Activated naive CD4-positive, alpha-beta T cell treated with anti-CD3 and anti-CD28 coated beads, Interleukin-2, amount 10 ng/mL, durations not matched to agents 7 days and 5 days (primary cell): ENCODE measurements at regions of chr1 and their contacts with region 1.

Region 1: DNA sequence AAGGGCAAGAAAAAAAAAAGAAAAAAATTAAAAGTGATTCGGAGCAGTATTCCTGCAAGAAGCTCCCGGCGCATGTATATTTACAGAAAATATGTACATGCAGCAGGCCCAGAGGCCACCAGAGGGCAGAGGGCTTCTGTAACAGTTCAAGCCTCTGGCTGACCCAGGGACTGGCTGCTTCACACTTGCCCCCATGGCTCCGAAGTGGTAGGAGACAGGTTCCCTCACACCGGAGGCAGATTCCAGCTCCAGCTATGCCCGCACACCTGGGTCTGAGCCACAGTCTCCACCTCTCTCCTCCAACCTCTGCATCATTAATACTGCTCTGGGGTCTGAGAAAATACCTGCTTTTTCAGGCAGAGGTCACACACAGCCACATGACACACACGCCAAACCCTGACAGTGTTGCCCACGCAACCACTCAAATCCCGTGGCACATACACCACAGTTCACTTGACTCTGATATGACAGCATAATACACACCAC is 2.2 kb upstream of the ARHGAP30 start:
- DNase-seq: peak; percentile 74
- H3K4me3 Mint-ChIP-seq: no peak overlapping the region
- H3K27ac Mint-ChIP-seq: peak overlapping the region; percentile 16
- H3K4me1 Mint-ChIP-seq: peaks cover 49% of the 10 kb centered on the region
- H3K27me3 Mint-ChIP-seq: peaks cover 4% of the 10 kb centered on the region

Region 2: GRCh38 chr1:160748181-160748877 is 323.6 kb before region 1 on chr1:
- CTCF ChIA-PET with region 1: no interaction called
- DNase-seq: no peak
- H3K4me3 Mint-ChIP-seq: no peak overlapping the region
- H3K27ac Mint-ChIP-seq: no peak overlapping the region
- H3K4me1 Mint-ChIP-seq: peaks cover 79% of the 10 kb centered on the region
- H3K27me3 Mint-ChIP-seq: no peaks in the 10 kb centered on the region

Region 3: DNA sequence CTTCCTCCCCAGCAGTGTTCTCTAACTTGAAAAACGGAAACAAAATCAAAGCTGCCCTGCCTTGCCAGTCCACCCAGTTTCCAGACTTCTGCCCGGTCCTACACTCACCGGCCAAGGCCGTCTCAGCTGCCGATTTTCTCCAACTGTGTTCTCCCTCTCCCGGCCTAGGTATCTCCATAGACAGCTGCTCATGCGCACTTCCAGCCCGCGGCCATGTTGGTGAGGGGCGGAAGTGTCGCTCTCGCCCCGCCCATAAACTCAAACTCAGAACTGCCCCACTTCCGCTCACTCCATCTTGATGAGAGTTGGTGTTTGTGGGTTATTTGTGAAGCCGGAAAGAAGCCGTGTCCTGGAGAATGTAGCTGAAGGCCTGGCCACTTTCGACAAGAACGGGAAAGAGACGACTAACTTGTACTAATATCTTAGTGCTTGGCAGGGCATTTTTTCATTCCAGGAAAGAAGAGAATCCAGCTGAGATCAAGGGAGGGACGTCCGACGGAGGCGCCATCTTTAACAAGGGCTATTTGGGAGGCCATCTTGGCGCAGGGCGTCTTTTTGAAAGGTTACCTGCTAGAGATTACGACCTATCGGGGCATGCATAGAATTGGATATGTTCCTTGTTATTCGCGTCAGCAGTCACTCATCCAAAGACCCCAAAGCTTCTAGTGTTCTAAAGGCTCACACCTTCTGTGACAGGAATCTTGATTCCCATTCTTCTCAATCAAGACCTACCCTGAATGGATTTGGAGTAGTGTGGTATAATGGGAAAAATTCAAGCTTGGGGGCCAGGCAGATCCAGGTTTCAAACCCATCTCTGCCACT is 26.0 kb before region 1 on chr1 and contains the start of gene USF1:
- CTCF ChIA-PET with region 1: interaction called, 35 read pairs
- DNase-seq: peak; percentile 94
- H3K4me3 Mint-ChIP-seq: peak within 1 kb of the TSS; percentile 86
- H3K27ac Mint-ChIP-seq: peak within 1 kb of the TSS; percentile 97
- H3K4me1 Mint-ChIP-seq: peaks cover 57% of the 10 kb centered on the region
- H3K27me3 Mint-ChIP-seq: no peaks in the 10 kb centered on the region

Region 4: DNA sequence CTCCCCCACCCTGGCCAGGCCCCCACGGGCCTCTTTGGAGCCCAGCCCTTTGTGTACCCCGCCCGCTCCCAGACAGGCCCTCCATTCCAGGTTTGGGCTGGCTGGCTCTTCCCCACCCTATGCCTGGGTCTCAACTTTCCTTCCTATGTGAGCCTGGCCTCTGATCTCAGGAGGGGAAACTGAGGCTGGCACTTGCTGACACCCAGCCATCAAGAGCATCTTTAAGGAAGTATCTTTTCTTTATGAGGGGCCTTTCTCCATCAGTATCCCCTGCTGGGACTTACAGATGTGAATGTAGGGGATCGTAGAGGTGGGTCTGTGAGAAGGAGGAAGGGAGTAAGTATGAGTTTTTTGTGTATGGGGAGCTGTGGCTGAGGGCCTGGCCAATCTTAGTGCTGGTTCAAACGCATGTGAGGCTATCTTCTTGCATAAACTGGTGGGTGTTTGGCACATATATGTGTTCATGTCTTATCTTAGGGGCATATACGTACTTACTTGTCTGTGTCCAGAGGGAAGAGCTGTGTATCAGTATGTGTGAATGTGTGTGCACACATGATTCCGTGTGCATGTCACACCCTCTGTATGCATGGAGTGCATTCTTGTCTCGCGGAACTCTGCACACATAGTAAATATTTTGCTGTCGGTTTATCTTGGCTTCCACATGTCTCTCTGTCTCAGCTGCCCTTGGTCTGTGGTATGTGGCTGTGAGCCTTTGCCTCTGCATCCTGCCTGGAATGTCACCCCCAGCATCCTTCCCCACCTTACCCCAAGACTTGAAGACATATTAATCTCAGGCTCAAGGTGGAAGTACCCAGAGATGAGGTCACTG is 12.0 kb after region 1 on chr1:
- CTCF ChIA-PET with region 1: interaction called, 20 read pairs
- DNase-seq: no peak
- H3K4me3 Mint-ChIP-seq: no peak overlapping the region
- H3K27ac Mint-ChIP-seq: no peak overlapping the region
- H3K4me1 Mint-ChIP-seq: peaks cover 2% of the 10 kb centered on the region
- H3K27me3 Mint-ChIP-seq: peaks cover 51% of the 10 kb centered on the region

Region 5: GRCh38 chr1:161216945-161217712 is 145.2 kb after region 1 on chr1:
- CTCF ChIA-PET with region 1: no interaction called
- DNase-seq: no peak
- H3K4me3 Mint-ChIP-seq: no peak overlapping the region
- H3K27ac Mint-ChIP-seq: no peak overlapping the region
- H3K4me1 Mint-ChIP-seq: peaks cover 52% of the 10 kb centered on the region
- H3K27me3 Mint-ChIP-seq: peaks cover 5% of the 10 kb centered on the region

Region 6: GRCh38 chr1:161238039-161238473 is 166.1 kb after region 1 on chr1 and contains the start of gene NR1I3:
- CTCF ChIA-PET with region 1: no interaction called
- DNase-seq: no peak
- H3K4me3 Mint-ChIP-seq: no peak within 1 kb of the TSS
- H3K27ac Mint-ChIP-seq: no peak within 1 kb of the TSS
- H3K4me1 Mint-ChIP-seq: no peaks in the 10 kb centered on the region
- H3K27me3 Mint-ChIP-seq: peaks cover 38% of the 10 kb centered on the region